H1 (cell line): ENCODE measurements at regions of chr12 and their contacts with region 1.

Region 1: GRCh38 chr12:107105410-107105703 is 12.0 kb upstream of the CRY1 start:
- DNase-seq: no peak
- H3K4me3 ChIP-seq: no peak overlapping the region
- H3K27ac ChIP-seq: no peak overlapping the region
- H3K4me1 ChIP-seq: no peaks in the 10 kb centered on the region
- H3K27me3 ChIP-seq: no peaks in the 10 kb centered on the region
- CTCF ChIP-seq: no peak
- EP300 ChIP-seq: no peak
- POLR2A ChIP-seq: no peak
- RAD21 ChIP-seq: no peak

Region 2: DNA sequence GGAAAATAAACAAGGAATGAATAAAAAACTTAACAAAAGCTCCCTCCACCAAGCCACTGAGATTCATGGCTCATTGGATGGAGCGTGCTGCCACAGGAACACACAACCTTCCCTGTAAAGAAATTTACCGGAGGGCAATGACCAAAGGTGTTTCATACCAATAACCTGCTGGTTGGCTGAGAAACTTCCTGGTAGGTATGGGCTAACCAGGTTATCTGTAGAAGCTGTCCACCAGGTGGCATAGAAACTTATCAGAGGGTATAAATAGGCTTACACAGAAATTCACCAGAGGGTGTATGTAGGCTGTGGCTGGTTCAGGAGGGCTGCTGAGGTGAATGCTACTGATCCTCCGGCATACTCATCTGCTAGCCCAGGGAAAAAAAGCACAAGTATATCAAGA is 91.3 kb before region 1 on chr12:
- CTCF ChIA-PET with region 1: interaction called, 13 read pairs
- POLR2A ChIA-PET with region 1: no interaction called
- DNase-seq: no peak
- H3K4me3 ChIP-seq: no peak overlapping the region
- H3K27ac ChIP-seq: no peak overlapping the region
- H3K4me1 ChIP-seq: no peaks in the 10 kb centered on the region
- H3K27me3 ChIP-seq: no peaks in the 10 kb centered on the region
- CTCF ChIP-seq: peak in 2 of 3 experiments; percentile 37 to 56; a peak in 3 of 4 replicates
- EP300 ChIP-seq: no peak
- POLR2A ChIP-seq: no peak
- RAD21 ChIP-seq: peak; percentile 32 to 43; a peak in 3 of 4 replicates

Region 3: GRCh38 chr12:107079172-107080011 is 26.0 kb before region 1 on chr12:
- CTCF ChIA-PET with region 1: interaction called, 25 read pairs
- POLR2A ChIA-PET with region 1: no interaction called
- DNase-seq: no peak
- H3K4me3 ChIP-seq: no peak overlapping the region
- H3K27ac ChIP-seq: no peak overlapping the region
- H3K4me1 ChIP-seq: peaks cover 0 to 2% (median 0%) of the 10 kb centered on the region in 4 experiments; a peak in 2 of 7 replicates
- H3K27me3 ChIP-seq: no peaks in the 10 kb centered on the region
- CTCF ChIP-seq: peak in 2 of 3 experiments; percentile 30 to 55; a peak in 2 of 4 replicates
- EP300 ChIP-seq: no peak
- POLR2A ChIP-seq: no peak
- RAD21 ChIP-seq: peak; percentile 25 to 35; a peak in 3 of 4 replicates

Region 4: GRCh38 chr12:107093417-107094182 is 11.8 kb before region 1 on chr12 and contains the start of gene CRY1:
- CTCF ChIA-PET with region 1: interaction called, 67 read pairs
- POLR2A ChIA-PET with region 1: interaction called, 7 read pairs
- DNase-seq: peak; percentile 81 to 99
- H3K4me3 ChIP-seq: peak within 1 kb of the TSS; percentile 89 to 98 (median 96)
- H3K27ac ChIP-seq: peak within 1 kb of the TSS; percentile 99
- H3K4me1 ChIP-seq: peaks cover 0 to 3% (median 0%) of the 10 kb centered on the region in 4 experiments; a peak in 4 of 7 replicates
- H3K27me3 ChIP-seq: no peaks in the 10 kb centered on the region
- CTCF ChIP-seq: no peak
- EP300 ChIP-seq: no peak
- POLR2A ChIP-seq: peak; percentile 20 to 87
- RAD21 ChIP-seq: no peak
- total RNA-seq, gene CRY1: 25.1 TPM in 2 replicates

Region 5: GRCh38 chr12:107126796-107127481 is 21.6 kb after region 1 on chr12:
- CTCF ChIA-PET with region 1: interaction called, 30 read pairs
- POLR2A ChIA-PET with region 1: no interaction called
- DNase-seq: no peak
- H3K4me3 ChIP-seq: no peak overlapping the region
- H3K27ac ChIP-seq: no peak overlapping the region
- H3K4me1 ChIP-seq: peaks cover 0 to 8% (median 1%) of the 10 kb centered on the region in 4 experiments; a peak in 4 of 7 replicates
- H3K27me3 ChIP-seq: no peaks in the 10 kb centered on the region
- CTCF ChIP-seq: peak in 2 of 3 experiments; percentile 41 to 48; a peak in 3 of 4 replicates
- EP300 ChIP-seq: no peak
- POLR2A ChIP-seq: no peak
- RAD21 ChIP-seq: peak; percentile 57 to 71